Colonic mucosa (tissue), 4 donors: ENCODE measurements at regions of chr14 and their contacts with region 1.

Region 1: DNA sequence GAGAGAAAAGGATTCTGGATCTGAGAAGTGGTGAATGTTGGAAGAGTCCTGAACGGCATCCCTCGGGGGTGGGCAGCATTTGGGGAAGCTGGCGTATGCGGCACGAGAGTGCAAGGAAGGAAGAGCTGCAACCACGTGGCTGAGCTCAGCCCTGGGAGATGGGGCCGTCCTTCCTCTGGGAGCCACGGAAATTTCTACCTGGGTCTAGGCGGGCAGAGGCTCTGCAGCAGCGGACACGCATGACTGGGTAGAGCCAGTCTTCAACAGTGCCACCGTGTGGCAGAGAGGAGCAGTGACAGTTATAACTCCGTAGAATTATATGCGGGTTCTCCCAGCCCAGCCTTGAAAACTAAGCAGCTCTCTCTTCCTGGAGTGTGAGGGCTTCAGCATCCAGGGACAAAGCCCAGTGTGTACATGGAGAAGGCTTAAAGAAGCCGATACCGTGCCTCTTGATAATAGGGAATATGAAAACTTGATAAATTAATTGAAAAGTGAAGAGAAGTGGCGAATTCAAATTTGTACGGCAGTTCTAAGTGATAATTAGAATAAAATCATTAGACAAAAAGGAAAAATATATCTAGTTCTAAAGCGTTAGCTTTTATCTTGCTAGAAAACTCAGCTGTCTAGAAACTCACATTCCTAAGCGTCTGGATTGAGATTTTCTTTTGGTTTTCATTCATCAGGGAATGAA is 82.9 kb upstream of the STXBP6 start:
- DNase-seq: peak; percentile 65
- H3K4me3 ChIP-seq: no peak overlapping the region
- H3K27ac ChIP-seq: no peak overlapping the region
- H3K4me1 ChIP-seq: no peaks in the 10 kb centered on the region
- H3K27me3 ChIP-seq: no peaks in the 10 kb centered on the region
- CTCF ChIP-seq: peak; percentile 73

Region 2: GRCh38 chr14:24734878-24735500 is 397.9 kb before region 1 on chr14:
- intact Hi-C with region 1: loop called (anchors 5 kb)
- DNase-seq: peak; percentile 71
- H3K4me3 ChIP-seq: no peak overlapping the region
- H3K27ac ChIP-seq: no peak overlapping the region
- H3K4me1 ChIP-seq: no peaks in the 10 kb centered on the region
- H3K27me3 ChIP-seq: no peaks in the 10 kb centered on the region
- CTCF ChIP-seq: peak; percentile 72

Region 3: GRCh38 chr14:24806061-24806678 is 326.7 kb before region 1 on chr14:
- intact Hi-C with region 1: loop called (anchors 5 kb)
- DNase-seq: peak; percentile 91
- H3K4me3 ChIP-seq: no peak overlapping the region
- H3K27ac ChIP-seq: no peak overlapping the region
- H3K4me1 ChIP-seq: peaks cover 4% of the 10 kb centered on the region
- H3K27me3 ChIP-seq: no peaks in the 10 kb centered on the region
- CTCF ChIP-seq: peak; percentile 80

Region 4: DNA sequence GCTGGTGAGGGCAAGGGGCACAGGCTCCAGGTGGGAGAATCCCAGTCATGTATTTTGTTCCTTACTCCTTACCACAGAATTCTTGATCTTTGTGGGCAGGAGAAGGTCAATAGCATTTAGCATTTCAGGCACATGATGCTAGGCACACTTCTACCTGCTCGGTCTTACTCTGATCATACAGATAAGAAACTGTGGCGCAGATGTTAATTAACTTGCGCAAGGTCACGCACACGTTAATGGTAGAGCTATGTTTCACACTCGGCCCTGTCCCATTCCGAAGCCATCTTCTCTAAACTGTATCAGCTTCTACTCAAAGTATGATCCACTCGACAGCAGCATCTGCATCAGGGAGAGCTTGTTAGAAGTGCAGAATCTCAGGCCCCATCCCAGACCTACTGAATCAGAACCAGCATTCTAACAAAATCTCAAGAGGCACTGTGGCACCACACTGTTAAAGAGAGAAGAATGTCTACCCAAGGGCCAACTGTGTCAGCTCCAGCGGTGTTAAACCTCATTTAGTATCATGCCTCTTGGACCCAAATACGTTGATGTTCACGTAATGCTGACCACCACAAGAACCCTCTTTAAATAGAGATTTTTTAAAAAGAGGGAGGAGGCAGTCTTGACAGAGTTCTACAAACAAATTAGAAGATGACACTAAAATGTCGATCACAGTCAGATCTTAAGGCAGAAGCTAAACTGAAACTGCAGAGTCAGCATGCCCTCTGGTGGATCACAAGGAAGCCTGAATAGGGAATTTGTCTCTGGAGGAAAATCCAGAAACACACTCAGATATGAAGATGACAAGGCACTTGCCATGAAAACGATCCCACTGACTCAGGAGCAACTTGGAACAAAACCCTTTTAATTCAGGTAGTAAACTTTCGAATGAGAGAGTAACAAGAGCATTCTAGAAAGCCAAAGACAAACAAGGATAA is 90.2 kb before region 1 on chr14:
- intact Hi-C with region 1: loop called (anchors 5 kb)
- DNase-seq: peak; percentile 62
- H3K4me3 ChIP-seq: no peak overlapping the region
- H3K27ac ChIP-seq: peak overlapping the region; percentile 83
- H3K4me1 ChIP-seq: peaks cover 7% of the 10 kb centered on the region
- H3K27me3 ChIP-seq: no peaks in the 10 kb centered on the region
- CTCF ChIP-seq: peak; percentile 50